ENCODE measurements at regions of chr3 and their contacts with region 1.

Region 1: GRCh38 chr3:23999012-23999641 is 54.0 kb downstream of the NR1D2 start:
- DNase-seq: peak; percentile 60 to 77
- H3K4me3 ChIP-seq: no peak overlapping the region
- H3K4me3 Mint-ChIP-seq: no peak overlapping the region
- H3K27ac Mint-ChIP-seq: no peak overlapping the region
- H3K4me1 ChIP-seq: no peaks in the 10 kb centered on the region
- H3K4me1 Mint-ChIP-seq: peaks cover 5% of the 10 kb centered on the region
- H3K27me3 ChIP-seq: no peaks in the 10 kb centered on the region
- H3K27me3 Mint-ChIP-seq: no peaks in the 10 kb centered on the region
- CTCF ChIP-seq: peak; percentile 83 to 90

Region 2: DNA sequence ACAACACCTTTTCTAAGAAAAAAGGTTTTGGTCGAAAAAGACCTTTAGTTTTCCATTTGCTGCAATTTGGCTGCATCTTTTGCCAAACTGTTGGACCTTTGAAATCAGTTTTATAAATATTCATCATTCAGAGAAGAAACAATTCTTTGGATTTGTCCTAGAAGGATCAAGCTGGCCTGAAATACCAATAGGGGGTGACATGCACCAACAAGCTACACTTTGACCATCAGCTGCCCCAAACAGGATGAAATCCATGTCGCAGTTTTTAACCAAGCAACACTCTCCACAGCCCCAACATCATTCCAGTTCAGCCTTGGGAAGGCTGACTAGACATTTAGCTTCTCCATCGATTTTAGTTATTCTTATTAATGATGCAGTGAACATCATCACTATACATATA is 72.4 kb before region 1 on chr3:
- CTCF ChIA-PET with region 1: no interaction called
- POLR2A ChIA-PET with region 1: no interaction called
- intact Hi-C with region 1: loop called (anchors 2 kb)
- DNase-seq: no peak
- H3K4me3 ChIP-seq: no peak overlapping the region
- H3K4me3 Mint-ChIP-seq: no peak overlapping the region
- H3K27ac Mint-ChIP-seq: no peak overlapping the region
- H3K4me1 ChIP-seq: peaks cover 7% of the 10 kb centered on the region
- H3K4me1 Mint-ChIP-seq: no peaks in the 10 kb centered on the region
- H3K27me3 ChIP-seq: no peaks in the 10 kb centered on the region
- H3K27me3 Mint-ChIP-seq: no peaks in the 10 kb centered on the region
- CTCF ChIP-seq: peak in 1 of 2 experiments; percentile 13

Region 3: GRCh38 chr3:24060055-24060454 is 60.9 kb after region 1 on chr3:
- CTCF ChIA-PET with region 1: no interaction called
- POLR2A ChIA-PET with region 1: no interaction called
- intact Hi-C with region 1: loop called (anchors 5 kb)
- DNase-seq: peak in 1 of 2 experiments; percentile 32
- H3K4me3 ChIP-seq: no peak overlapping the region
- H3K4me3 Mint-ChIP-seq: no peak overlapping the region
- H3K27ac Mint-ChIP-seq: no peak overlapping the region
- H3K4me1 ChIP-seq: no peaks in the 10 kb centered on the region
- H3K4me1 Mint-ChIP-seq: no peaks in the 10 kb centered on the region
- H3K27me3 ChIP-seq: no peaks in the 10 kb centered on the region
- H3K27me3 Mint-ChIP-seq: peaks cover 4% of the 10 kb centered on the region
- CTCF ChIP-seq: no peak

Region 4: DNA sequence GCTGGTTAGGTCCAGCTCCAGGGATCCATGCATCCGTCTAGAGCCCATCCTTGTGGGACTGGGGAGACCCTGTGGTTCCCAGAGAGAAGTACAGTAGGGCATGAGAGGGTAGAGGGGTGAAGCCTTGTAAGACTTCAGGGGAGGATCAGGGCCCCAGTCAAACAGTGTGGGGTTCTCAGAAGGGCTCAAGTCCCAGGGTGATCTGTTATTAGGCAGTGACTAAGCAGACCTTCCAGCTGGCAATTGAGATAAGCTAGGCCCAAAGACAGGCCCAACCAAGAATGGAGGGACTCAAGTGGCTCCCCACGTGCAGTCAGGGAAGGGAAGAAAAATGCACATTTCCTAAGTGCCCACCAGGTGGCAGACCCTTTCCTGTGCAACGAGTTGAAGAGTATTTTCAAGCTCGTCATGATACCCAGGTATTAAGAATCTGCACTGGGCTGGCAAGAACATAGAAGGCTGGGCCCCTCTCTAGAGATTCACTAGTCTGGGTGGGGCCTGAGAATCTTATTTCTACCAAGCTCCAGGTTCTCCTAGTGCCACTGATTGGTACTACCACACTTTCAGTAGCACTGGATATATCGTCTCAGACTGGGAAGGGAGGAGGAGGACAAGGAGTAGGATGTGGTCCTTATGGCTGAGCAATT is 186.7 kb after region 1 on chr3:
- CTCF ChIA-PET with region 1: interaction called, 5 read pairs
- POLR2A ChIA-PET with region 1: no interaction called
- intact Hi-C with region 1: loop called (anchors 5 kb)
- DNase-seq: peak; percentile 37 to 48
- H3K4me3 ChIP-seq: no peak overlapping the region
- H3K4me3 Mint-ChIP-seq: no peak overlapping the region
- H3K27ac Mint-ChIP-seq: no peak overlapping the region
- H3K4me1 ChIP-seq: peaks cover 16% of the 10 kb centered on the region; the same call in 1 of the 2 replicates
- H3K4me1 Mint-ChIP-seq: peaks cover 7% of the 10 kb centered on the region
- H3K27me3 ChIP-seq: no peaks in the 10 kb centered on the region
- H3K27me3 Mint-ChIP-seq: no peaks in the 10 kb centered on the region
- CTCF ChIP-seq: peak; percentile 48 to 67